Endothelial cell of umbilical vein (primary cell): ENCODE measurements at regions of chr7 and their contacts with region 1.

Region 1: DNA sequence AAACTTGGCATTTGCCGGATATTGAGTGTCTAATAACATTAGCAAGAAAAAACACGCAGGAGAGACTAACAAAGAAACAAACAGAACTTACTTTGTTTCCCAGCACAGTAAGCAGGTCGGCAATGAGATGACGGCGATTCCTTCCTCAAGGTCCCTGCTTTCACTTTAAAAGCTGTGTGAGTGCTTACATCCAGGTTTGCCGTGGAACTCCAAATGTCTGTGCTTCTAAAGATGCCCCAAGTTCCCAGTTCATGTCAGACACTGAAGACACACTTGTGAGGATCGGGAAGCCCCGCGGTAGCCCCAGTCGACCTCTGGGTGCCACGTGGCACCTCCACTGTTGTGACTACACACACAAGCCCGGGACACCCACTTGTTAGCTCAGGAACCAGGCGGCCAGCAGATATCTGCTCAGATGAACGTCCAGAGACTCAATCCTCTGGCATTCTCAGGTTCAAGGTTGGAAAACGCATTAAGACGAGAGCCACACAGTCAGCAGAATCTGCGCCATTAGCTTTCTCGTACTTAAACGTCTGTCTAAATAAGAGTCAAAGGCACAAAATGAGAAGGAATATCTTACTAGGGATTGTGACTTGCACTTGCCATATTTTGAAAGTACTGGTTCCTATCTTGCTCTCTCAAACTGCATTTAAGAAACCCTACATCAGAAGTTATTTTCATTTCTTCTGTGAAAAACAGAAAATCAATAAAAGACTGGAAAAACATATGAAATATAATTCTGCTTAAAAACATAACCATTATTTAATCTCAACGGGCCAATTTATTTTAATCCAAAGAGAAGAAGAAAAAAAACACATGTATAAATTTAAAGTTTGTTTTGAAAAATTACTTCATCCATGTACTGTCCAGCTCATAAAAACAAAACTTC is 207.6 kb upstream of the KLF14 start:
- DNase-seq: peak; percentile 55
- H3K4me3 ChIP-seq: peak overlapping the region; percentile 6 to 29 (median 25)
- H3K27ac ChIP-seq: peak overlapping the region; percentile 14
- H3K4me1 ChIP-seq: peaks cover 13% of the 10 kb centered on the region
- H3K27me3 ChIP-seq: no peaks in the 10 kb centered on the region
- CTCF ChIP-seq: no peak
- POLR2A ChIP-seq: no peak

Region 2: GRCh38 chr7:130838738-130839137 is 102.8 kb before region 1 on chr7:
- CTCF ChIA-PET with region 1: no interaction called
- POLR2A ChIA-PET with region 1: no interaction called
- dilution Hi-C with region 1: no loop called
- intact Hi-C with region 1: no loop called
- DNase-seq: peak; percentile 62
- H3K4me3 ChIP-seq: no peak overlapping the region
- H3K27ac ChIP-seq: peak overlapping the region; percentile 64
- H3K4me1 ChIP-seq: peaks cover 31% of the 10 kb centered on the region
- H3K27me3 ChIP-seq: no peaks in the 10 kb centered on the region
- CTCF ChIP-seq: no peak
- POLR2A ChIP-seq: no peak

Region 3: DNA sequence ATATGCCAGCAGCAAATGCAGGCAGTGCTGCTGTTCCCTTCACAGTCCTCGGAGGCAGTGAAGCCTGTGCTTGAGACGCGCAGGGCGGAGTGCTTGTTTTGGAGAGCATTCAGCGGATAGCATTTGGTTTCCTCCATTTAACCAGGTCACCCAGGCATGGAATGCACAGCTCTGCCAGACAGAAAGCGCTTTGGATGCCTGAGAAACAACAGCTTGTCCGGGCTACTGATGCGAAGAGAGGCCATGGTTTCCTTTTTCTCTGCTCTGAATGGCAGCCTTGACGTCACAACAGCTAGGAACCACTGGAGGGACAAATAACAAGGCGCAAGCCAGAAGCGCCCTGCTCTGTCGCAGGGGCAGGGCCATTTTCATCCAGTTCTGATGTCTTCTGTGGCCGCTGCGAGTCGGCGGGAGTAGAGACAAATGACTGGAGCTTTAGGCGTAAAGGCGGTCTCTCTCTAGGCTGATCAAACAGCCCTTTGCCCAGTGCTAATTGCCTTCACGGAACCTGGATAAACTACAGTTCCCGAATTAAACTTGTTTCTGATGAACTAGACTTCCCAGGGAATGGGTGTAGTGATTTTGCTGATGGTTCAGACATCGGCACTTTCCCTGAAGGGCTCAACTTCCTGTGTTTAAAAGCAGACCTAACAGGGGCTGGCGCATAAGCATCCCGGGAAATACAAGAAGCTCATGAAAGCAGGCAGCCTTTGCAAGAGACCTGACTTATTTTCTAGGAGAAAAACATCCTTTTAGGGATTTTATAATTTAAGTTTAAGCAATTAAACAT is 20.0 kb before region 1 on chr7:
- CTCF ChIA-PET with region 1: interaction called, 11 read pairs
- POLR2A ChIA-PET with region 1: no interaction called
- dilution Hi-C with region 1: no loop called
- intact Hi-C with region 1: no loop called
- DNase-seq: peak; percentile 91
- H3K4me3 ChIP-seq: peak overlapping the region in 2 of 3 experiments; percentile 9 to 25
- H3K27ac ChIP-seq: peak overlapping the region; percentile 90
- H3K4me1 ChIP-seq: peaks cover 49% of the 10 kb centered on the region
- H3K27me3 ChIP-seq: no peaks in the 10 kb centered on the region
- CTCF ChIP-seq: peak in 1 of 2 donors; percentile 4
- POLR2A ChIP-seq: peak; percentile 50

Region 4: GRCh38 chr7:130961128-130961601 is 19.6 kb after region 1 on chr7:
- CTCF ChIA-PET with region 1: interaction called, 37 read pairs
- POLR2A ChIA-PET with region 1: no interaction called
- dilution Hi-C with region 1: no loop called
- intact Hi-C with region 1: no loop called
- DNase-seq: no peak
- H3K4me3 ChIP-seq: no peak overlapping the region
- H3K27ac ChIP-seq: peak overlapping the region; percentile 42
- H3K4me1 ChIP-seq: peaks cover 21% of the 10 kb centered on the region
- H3K27me3 ChIP-seq: no peaks in the 10 kb centered on the region
- CTCF ChIP-seq: no peak
- POLR2A ChIP-seq: no peak